Prostate gland (tissue), 2 donors: ENCODE measurements at regions of chr15 and their contacts with region 1.

Region 1: DNA sequence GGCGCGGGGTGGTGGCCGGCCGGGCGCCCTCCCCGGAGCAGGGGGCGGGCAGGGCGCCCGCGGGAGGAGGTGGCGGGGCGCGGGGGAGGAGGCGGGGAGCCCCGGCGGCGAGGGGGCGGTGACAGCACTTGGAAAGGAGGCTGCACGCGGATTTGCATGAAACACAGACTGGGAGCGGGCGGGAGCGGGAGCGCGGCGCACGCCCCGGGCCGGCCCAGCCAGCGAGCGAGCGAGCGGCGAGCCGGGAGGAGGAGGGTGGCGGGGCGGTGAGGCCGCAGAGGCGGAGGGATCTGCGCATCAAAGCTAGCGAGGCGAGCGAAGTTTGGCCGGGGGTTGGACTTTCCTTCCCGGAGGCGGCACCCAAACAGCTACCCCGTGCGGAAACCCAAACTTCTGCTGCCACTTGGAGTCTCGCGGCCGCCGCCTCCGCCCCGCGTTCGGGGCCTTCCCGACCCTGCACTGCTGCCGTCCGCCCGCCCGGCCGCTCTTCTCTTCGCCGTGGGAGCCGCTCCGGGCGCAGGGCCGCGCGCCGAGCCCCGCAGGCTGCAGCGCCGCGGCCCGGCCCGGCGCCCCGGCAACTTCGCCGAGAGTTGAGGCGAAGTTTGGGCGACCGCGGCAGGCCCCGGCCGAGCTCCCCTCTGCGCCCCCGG is at the start of gene SMAD3:
- DNase-seq: peak; percentile 91
- H3K4me3 ChIP-seq: peak within 1 kb of the TSS; percentile 81 to 92
- H3K27ac ChIP-seq: peak within 1 kb of the TSS; percentile 87 to 89
- H3K4me1 ChIP-seq: peaks cover 6% of the 10 kb centered on the region
- H3K27me3 ChIP-seq: no peaks in the 10 kb centered on the region
- CTCF ChIP-seq: no peak
- POLR2A ChIP-seq: peak; percentile 89
- total RNA-seq, gene SMAD3: 30.6 to 45.4 TPM

Region 2: GRCh38 chr15:66946578-66947164 is 118.9 kb before region 1 on chr15:
- intact Hi-C with region 1: loop called (anchors 10 kb)
- DNase-seq: peak; percentile 60
- H3K4me3 ChIP-seq: no peak overlapping the region
- H3K27ac ChIP-seq: no peak overlapping the region
- H3K4me1 ChIP-seq: no peaks in the 10 kb centered on the region
- H3K27me3 ChIP-seq: no peaks in the 10 kb centered on the region
- CTCF ChIP-seq: peak; percentile 86 to 95 (median 92)
- POLR2A ChIP-seq: no peak

Region 3: GRCh38 chr15:67120839-67121643 is 55.5 kb after region 1 on chr15:
- intact Hi-C with region 1: loop called (anchors 5 kb)
- DNase-seq: peak; percentile 69
- H3K4me3 ChIP-seq: peak overlapping the region in 1 of 2 donors; percentile 8
- H3K27ac ChIP-seq: peak overlapping the region; percentile 83 to 86
- H3K4me1 ChIP-seq: peaks cover 20% of the 10 kb centered on the region
- H3K27me3 ChIP-seq: no peaks in the 10 kb centered on the region
- CTCF ChIP-seq: no peak
- POLR2A ChIP-seq: no peak

Region 4: DNA sequence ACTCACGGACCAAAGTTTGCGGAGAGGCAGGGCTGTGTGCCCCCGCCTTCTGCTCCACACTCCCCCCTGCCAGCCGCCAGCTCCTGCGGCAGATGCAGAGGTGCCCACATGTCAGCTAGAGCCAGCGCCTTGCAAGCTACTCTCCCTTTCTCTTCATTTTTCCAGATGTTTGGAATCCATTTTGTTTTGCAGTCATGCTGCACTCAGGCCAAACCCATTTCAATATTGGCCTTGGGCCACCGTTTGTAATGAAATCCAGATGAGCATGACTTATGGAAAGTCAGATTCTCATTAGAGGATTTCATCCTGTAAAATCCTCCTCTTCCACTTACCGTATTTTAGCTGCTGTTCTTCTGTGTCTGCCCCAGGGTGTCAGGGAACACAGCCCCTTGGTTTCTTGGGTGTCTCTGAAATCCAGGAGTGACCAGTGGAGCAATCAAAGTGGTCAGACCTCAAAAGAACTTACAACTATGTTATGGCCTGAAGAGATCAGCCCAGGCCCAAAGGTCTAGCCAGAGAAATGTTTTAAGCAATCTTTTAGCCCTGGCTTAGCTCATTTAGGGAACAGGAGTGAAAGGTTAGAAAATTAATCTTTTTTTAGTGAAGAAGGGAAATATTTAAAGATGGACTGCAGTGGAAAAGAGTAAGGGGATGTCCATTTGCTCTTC is 123.1 kb after region 1 on chr15:
- intact Hi-C with region 1: loop called (anchors 5 kb)
- DNase-seq: no peak
- H3K4me3 ChIP-seq: no peak overlapping the region
- H3K27ac ChIP-seq: peak overlapping the region; percentile 51 to 54
- H3K4me1 ChIP-seq: peaks cover 25% of the 10 kb centered on the region
- H3K27me3 ChIP-seq: no peaks in the 10 kb centered on the region
- CTCF ChIP-seq: no peak
- POLR2A ChIP-seq: no peak

Region 5: GRCh38 chr15:67254238-67255175 is 188.9 kb after region 1 on chr15 and contains the starts of genes AAGAB and IQCH:
- intact Hi-C with region 1: loop called (anchors 5 kb)
- DNase-seq: peak; percentile 95
- H3K4me3 ChIP-seq: peak within 1 kb of the TSS; percentile 72 to 77
- H3K27ac ChIP-seq: peak within 1 kb of the TSS; percentile 73 to 78
- H3K4me1 ChIP-seq: no peaks in the 10 kb centered on the region
- H3K27me3 ChIP-seq: no peaks in the 10 kb centered on the region
- CTCF ChIP-seq: peak in 2 of 4 experiments; percentile 16 to 34
- POLR2A ChIP-seq: peak; percentile 61
- total RNA-seq, gene AAGAB: 34.1 to 34.3 TPM
- total RNA-seq, gene IQCH: 5.8 to 9.5 TPM

Region 6: GRCh38 chr15:67303490-67304363 is 238.2 kb after region 1 on chr15:
- intact Hi-C with region 1: loop called (anchors 5 kb)
- DNase-seq: peak; percentile 28
- H3K4me3 ChIP-seq: no peak overlapping the region
- H3K27ac ChIP-seq: no peak overlapping the region
- H3K4me1 ChIP-seq: no peaks in the 10 kb centered on the region
- H3K27me3 ChIP-seq: no peaks in the 10 kb centered on the region
- CTCF ChIP-seq: peak; percentile 18 to 83 (median 68)
- POLR2A ChIP-seq: no peak